ENCODE measurements at regions of chr1 and their contacts with region 1.

Region 1: GRCh38 chr1:229270547-229271447 is at the start of gene RAB4A:
- DNase-seq: peak; percentile 83
- total RNA-seq, gene RAB4A: 78.3 and 99.2 TPM in 2 replicates

Region 2: GRCh38 chr1:229452956-229453801 is 182.4 kb after region 1 on chr1:
- in situ Hi-C with region 1: loop called (anchors 25 kb)
- DNase-seq: peak; percentile 71

Measured in G401 (cell line).